ENCODE measurements at regions of chr2 and their contacts with region 1.

Region 1: GRCh38 chr2:54254180-54254579 is 1.8 kb downstream of the TSPYL6 start:
- DNase-seq: no peak

Region 2: DNA sequence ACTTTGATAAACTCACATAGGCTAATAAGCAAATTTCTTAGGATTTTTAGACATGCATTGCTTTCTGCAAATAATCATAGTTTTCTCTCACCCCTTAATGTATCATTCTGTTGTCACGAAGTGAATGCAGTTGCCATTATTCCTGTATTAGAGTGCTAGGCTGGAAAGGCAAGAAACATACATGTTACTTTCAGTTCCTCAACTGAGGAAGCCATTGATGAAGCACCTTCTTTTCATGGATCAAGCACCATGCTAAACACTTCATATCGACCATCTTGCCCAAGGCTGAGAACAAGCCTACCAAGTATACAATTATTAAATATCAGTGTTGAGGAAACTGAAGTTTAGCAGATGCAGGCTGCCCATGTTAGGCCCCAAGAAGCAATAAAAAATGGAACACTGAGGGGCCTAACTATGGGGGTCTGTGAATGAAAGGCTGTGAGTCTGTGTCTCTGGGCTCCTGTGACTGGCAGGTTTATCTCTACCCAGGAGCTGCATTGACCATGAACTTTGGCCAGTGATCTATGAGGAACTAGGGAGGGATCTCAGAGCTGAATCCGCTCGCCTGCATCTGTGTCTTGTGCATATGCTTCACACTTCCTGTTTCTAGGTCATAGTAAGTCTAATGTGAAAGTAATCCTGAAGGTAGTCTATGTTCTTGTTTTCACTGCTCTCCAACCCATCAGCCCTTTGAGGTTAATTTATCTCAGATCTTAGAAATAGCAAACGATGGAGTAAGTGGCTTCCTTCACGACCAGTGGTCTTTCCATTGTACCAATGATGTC is 17.9 kb after region 1 on chr2:
- intact Hi-C with region 1: no loop called
- DNase-seq: no peak

Region 3: GRCh38 chr2:54295911-54296310 is 41.7 kb after region 1 on chr2:
- intact Hi-C with region 1: loop called in 1 of 2 experiments (anchors 2 kb)
- DNase-seq: no peak